ENCODE measurements at regions of chr11 and their contacts with region 1.

Region 1: GRCh38 chr11:129323896-129324512 is 51.6 kb upstream of the BARX2 start:
- DNase-seq: no peak
- H3K4me3 ChIP-seq: no peak overlapping the region
- H3K27ac ChIP-seq: no peak overlapping the region
- H3K27me3 ChIP-seq: peaks cover 9% of the 10 kb centered on the region
- CTCF ChIP-seq: no peak

Region 2: DNA sequence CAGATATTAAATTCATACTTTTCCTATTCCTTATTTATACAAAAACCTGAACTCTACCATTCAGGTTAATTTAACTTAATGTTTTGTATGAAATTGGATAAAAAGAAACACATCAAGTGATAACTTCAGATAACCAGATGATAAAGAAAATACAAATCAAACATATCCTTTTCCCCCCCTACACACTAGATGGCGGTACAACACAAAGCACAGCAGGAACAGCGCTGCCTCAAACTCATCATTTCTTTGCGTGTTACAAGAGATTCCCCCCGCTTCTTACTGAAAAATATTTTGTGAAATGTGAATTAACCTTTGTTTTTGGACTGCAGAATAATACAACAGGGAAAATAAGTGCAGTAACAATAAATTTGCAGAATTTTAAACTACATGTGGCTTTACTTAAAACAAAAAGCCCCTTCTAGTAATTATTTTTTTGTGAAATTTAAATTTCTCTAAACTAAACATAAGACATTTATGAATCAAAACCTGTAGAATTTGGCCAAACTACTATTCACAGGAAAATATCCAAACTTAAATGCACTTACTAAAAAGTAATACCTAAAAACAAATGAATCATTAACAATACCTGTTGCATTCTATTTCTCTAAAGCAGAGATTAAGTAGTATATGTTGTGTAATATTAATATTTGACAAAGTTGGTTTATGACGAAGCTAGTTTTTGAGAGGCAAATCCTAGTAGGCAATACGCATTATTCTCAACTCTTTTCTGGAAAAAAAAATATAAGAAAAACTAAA is 206.2 kb before region 1 on chr11:
- CTCF ChIA-PET with region 1: interaction called, 17 read pairs
- POLR2A ChIA-PET with region 1: no interaction called
- DNase-seq: peak; percentile 64
- H3K4me3 ChIP-seq: no peak overlapping the region
- H3K27ac ChIP-seq: no peak overlapping the region
- H3K27me3 ChIP-seq: no peaks in the 10 kb centered on the region
- CTCF ChIP-seq: peak; percentile 96

Region 3: DNA sequence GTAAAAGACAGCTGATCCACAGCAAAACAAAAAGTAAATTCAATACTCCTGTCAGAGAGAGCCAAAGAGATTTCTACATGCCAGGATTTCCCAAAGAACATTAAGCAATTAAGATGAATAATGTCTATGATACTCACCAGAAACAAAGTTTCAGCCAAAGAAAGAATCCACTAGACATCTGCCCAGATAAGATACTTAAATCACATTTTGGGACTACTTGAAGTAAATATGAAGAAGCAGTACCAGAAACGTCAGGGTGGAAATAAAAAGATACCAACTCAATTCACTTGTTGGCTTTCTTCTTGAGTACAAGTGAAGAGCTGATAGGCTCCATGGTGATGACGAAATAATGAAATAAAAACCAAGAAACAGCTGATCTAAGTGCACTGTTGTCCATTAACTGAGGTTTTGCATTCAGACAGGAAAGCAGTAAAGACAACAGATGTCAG is 100.3 kb before region 1 on chr11:
- CTCF ChIA-PET with region 1: interaction called, 10 read pairs
- POLR2A ChIA-PET with region 1: no interaction called
- DNase-seq: no peak
- H3K4me3 ChIP-seq: no peak overlapping the region
- H3K27ac ChIP-seq: no peak overlapping the region
- H3K27me3 ChIP-seq: no peaks in the 10 kb centered on the region
- CTCF ChIP-seq: no peak

Region 4: DNA sequence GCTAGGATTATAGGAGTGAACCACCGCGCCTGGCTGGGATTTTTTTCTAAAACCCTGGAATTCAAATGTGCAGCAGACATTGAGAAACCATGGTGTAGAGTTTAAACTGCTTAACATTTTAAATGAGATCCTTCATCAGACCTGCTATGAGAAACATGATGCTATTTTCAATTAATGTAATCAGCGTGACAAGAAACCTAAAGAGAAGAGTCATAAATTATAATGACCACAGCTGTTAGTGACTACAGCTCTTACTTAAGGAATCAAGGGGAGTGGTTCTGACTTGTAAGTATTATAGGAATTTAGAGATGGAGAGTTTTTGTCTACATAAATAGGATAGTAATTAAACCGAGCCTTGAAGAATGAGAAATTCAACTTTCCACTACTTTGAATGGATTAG is 222.3 kb after region 1 on chr11:
- CTCF ChIA-PET with region 1: no interaction called
- POLR2A ChIA-PET with region 1: no interaction called
- DNase-seq: no peak
- H3K4me3 ChIP-seq: no peak overlapping the region
- H3K27ac ChIP-seq: no peak overlapping the region
- H3K27me3 ChIP-seq: no peaks in the 10 kb centered on the region
- CTCF ChIP-seq: no peak

Measured in AG04450 (cell line).